ENCODE measurements at regions of chr11 and their contacts with region 1.

Region 1: GRCh38 chr11:18721561-18722292 is 4.3 kb downstream of the IGSF22 start:
- DNase-seq: peak; percentile 62 to 70 (median 65)
- H3K4me3 ChIP-seq: peak overlapping the region; percentile 38 to 88 (median 73)
- H3K27ac ChIP-seq: no peak overlapping the region
- H3K4me1 ChIP-seq: peaks cover 0 to 18% (median 14%) of the 10 kb centered on the region in 4 experiments
- H3K27me3 ChIP-seq: peaks cover 0 to 6% (median 0%) of the 10 kb centered on the region in 5 experiments

Region 2: DNA sequence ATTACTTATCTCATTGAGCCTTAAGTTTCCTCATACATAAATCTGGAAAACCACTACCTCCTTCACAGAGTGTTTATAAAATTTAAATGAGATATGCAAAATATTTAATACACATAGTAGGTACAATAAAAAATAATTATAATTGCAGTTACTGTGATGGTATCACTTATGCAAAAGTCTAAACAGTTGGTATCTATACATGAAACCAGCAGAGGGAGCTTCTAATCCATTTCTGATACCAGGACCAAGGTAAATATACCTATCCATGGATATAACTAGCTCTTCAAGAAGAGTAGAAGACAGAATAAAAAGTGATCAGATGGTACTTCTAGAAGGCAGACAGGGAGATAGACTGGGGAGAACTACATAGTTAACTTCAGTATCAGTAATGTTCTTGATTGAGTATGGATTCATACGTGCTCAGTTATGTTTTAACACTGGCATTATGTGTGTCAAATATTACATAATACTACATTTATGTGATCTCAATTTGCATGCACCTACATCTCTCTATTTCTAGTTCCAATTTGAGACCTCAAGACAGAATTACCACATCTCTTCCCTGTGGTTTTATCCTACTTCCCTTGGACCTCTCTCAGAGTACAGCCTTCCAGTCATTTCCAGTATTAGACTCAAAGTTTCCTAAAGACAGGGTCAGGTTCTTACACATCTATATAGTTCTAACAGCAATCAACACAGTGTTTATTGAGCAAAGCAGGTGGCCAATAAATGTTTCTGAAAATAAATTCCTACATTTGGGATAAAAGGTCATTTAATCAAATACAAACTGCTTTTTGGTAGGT is 181.3 kb before region 1 on chr11:
- CTCF ChIA-PET with region 1: interaction called, 13 read pairs
- POLR2A ChIA-PET with region 1: no interaction called
- DNase-seq: peak; percentile 36 to 58 (median 52)
- H3K4me3 ChIP-seq: no peak overlapping the region
- H3K27ac ChIP-seq: no peak overlapping the region
- H3K4me1 ChIP-seq: no peaks in the 10 kb centered on the region
- H3K27me3 ChIP-seq: no peaks in the 10 kb centered on the region

Measured in common myeloid progenitor, CD34-positive (primary cell).